ENCODE measurements at regions of chr1 and their contacts with region 1.

Region 1: GRCh38 chr1:229661022-229661877 is 35.2 kb downstream of the URB2 start:
- DNase-seq: peak; percentile 49
- H3K4me3 Mint-ChIP-seq: no peak overlapping the region
- H3K27ac Mint-ChIP-seq: no peak overlapping the region
- H3K4me1 Mint-ChIP-seq: peaks cover 21% of the 10 kb centered on the region
- H3K27me3 Mint-ChIP-seq: no peaks in the 10 kb centered on the region

Region 2: DNA sequence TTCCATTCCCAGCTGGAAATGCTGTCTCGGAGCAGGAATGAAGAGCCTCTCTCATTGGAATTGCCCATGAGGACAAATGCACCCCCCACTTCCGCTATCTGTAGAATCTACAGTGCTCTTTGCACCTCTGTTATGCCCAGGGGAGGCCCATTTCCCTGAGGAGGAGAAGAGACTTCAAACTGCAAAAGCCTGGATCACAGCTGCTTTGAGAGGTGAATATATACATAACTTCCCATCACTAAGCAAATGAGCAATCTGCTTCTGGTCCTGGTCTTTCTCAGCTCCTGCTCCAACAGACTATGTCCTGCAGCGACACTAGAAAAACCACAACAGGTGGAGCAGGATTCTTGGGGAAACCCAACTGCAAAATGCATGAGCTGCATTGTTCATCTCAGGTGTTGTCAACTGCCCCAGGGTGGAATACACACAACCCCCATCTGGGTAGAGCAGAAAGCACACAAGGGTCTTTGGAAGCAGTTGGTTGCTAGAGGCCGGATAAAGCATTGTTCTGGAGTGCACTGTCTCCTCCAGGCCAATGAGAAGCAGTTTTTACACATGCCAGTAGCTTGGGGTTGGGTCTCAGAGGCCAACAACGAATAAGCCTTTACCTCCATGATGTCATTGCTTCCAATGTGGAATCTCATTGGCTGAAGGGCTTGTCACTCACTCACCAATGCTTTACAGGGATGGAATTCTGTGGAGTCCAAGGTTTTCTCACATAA is 458.1 kb before region 1 on chr1:
- intact Hi-C with region 1: no loop called
- DNase-seq: no peak
- H3K4me3 Mint-ChIP-seq: no peak overlapping the region
- H3K27ac Mint-ChIP-seq: no peak overlapping the region
- H3K4me1 Mint-ChIP-seq: peaks cover 20% of the 10 kb centered on the region
- H3K27me3 Mint-ChIP-seq: peaks cover 16% of the 10 kb centered on the region

Region 3: GRCh38 chr1:229487181-229487580 is 174.1 kb before region 1 on chr1:
- intact Hi-C with region 1: no loop called
- DNase-seq: no peak
- H3K4me3 Mint-ChIP-seq: no peak overlapping the region
- H3K27ac Mint-ChIP-seq: no peak overlapping the region
- H3K4me1 Mint-ChIP-seq: no peaks in the 10 kb centered on the region
- H3K27me3 Mint-ChIP-seq: no peaks in the 10 kb centered on the region

Region 4: DNA sequence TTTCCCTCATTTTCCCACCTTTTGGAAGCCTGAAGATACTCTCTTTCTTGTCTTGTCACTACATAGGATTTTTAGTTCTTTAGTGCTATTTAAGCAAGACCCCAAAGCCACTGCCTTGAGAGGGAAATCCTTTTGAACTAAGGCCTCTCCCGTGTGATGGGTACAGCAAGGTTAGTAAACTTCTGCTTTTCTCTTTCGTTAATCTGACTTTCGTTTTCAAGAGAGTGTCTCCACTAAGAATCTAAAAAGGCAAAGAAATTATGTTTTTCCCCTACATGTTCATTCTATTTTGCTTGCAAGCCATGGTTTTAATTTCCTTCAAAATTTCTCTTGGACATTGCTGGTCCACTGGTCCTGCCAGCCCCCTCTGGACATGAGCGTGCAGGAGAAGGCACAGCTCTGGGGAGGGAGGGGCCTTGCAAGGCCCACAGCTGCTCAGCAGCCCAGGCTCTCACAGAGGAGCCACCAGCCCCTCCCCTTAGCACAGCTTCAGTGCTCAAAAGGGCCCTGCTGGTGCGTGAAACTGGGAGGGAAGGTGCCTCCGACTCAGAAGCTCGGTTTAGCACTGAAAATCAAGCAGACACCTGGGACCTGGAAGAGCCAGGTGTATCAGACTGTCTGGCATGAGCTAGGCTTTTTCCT is 194.9 kb after region 1 on chr1:
- intact Hi-C with region 1: loop called (anchors 5 kb)
- DNase-seq: peak; percentile 16
- H3K4me3 Mint-ChIP-seq: peak overlapping the region; percentile 58
- H3K27ac Mint-ChIP-seq: no peak overlapping the region
- H3K4me1 Mint-ChIP-seq: peaks cover 10% of the 10 kb centered on the region
- H3K27me3 Mint-ChIP-seq: peaks cover 9% of the 10 kb centered on the region

Region 5: GRCh38 chr1:230109895-230110667 is 448.8 kb after region 1 on chr1:
- intact Hi-C with region 1: loop called (anchors 1 kb)
- DNase-seq: peak; percentile 57
- H3K4me3 Mint-ChIP-seq: peak overlapping the region; percentile 53
- H3K27ac Mint-ChIP-seq: peak overlapping the region; percentile 89
- H3K4me1 Mint-ChIP-seq: peaks cover 82% of the 10 kb centered on the region
- H3K27me3 Mint-ChIP-seq: no peaks in the 10 kb centered on the region

Region 6: GRCh38 chr1:230186003-230186863 is 525.0 kb after region 1 on chr1:
- intact Hi-C with region 1: loop called (anchors 5 kb)
- DNase-seq: no peak
- H3K4me3 Mint-ChIP-seq: no peak overlapping the region
- H3K27ac Mint-ChIP-seq: peak overlapping the region; percentile 74
- H3K4me1 Mint-ChIP-seq: peaks cover 41% of the 10 kb centered on the region
- H3K27me3 Mint-ChIP-seq: no peaks in the 10 kb centered on the region

Region 7: DNA sequence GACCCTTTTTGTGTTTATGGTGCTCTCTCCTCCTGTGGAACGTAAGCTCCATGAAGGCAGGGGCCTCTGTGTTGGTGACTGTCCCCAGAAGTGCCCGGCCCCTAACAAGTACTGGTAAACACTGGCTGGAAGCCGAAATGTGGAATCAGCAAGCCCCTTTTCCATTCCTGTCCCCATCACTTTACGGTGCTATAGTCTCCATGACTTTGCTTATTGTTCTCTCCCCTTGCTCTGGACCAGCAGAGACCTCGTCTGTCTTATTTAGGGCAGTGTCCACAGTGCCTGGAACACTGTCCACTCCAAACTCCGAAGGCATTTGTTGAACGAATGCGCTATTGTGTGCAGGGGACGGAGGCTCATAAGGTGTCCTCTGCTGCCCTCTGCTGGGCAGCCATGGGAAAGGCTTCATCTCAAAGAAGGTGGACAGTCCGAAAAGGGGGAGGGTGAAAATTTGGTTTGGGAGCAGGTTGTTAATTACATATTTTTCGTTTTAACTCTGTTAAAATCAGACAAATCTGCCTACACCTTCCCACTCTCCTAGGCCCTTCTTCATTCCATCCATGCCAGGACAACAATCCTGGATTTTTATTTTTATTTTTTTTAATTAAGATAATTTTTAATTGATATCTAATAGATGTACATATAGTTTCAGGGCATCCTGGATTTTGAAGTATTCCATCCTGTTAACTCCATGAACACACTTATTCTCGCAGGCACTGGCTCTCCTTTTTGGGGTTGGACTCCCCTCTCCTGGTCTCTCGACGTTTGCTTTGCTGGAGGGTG is 649.3 kb after region 1 on chr1:
- intact Hi-C with region 1: loop called (anchors 1 kb)
- DNase-seq: peak; percentile 43
- H3K4me3 Mint-ChIP-seq: no peak overlapping the region
- H3K27ac Mint-ChIP-seq: no peak overlapping the region
- H3K4me1 Mint-ChIP-seq: peaks cover 4% of the 10 kb centered on the region
- H3K27me3 Mint-ChIP-seq: peaks cover 14% of the 10 kb centered on the region